ENCODE measurements at regions of chr3 and their contacts with region 1.

Region 1: DNA sequence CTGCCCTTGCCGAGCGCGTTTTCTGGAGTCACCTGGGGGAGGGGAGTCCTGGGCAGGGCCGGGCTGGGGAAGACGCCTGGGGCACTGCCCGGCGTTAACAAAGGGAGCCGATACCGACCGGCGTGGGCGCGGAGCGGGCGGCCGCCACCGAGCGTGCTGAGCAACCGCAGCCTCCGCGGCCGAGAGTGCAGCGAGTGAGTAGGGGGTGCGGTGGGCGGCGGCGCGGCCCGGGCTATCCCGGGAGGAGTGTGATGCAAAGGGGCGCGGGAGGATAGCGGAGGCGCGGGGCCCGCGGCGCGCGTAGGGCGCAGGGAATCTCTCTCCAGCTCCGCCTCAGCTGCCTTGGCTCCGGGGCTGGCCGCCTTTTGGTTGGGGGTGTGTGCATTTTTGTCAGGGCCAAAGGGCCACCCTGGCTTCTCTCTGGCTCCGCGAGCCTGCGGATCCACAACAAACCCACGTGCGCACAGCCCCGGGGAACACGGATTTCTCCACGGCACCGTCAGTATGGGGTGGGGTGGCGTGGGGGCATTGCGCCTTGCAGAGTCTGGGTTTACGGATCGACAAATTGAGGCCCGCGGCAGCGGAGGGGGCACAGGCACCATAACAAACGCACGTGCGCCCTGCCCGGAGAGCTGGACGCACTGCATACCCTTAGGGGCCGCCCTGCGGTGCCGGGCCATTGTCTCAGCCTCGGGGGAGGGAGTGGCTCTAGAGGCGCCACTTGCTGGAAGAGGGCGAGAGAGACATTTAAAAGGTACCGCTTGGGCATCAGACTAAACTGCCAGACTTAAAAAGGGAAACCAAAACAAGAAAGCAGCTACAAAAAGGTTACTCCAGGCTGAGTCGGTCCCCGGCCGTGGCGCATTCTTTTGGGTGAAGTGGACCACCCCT is 560 bp downstream of the ST6GAL1 start:
- DNase-seq: peak; percentile 39 to 78 (median 75)
- ATAC-seq: peak; percentile 87
- H3K4me3 ChIP-seq: peak overlapping the region; percentile 79
- H3K4me3 Mint-ChIP-seq: peak overlapping the region; percentile 89 to 100 (median 98)
- H3K27ac ChIP-seq: peak overlapping the region; percentile 74
- H3K27ac Mint-ChIP-seq: peak overlapping the region; percentile 88 to 98 (median 95)
- H3K4me1 ChIP-seq: peaks cover 8 to 20% of the 10 kb centered on the region in 2 donors
- H3K4me1 Mint-ChIP-seq: peaks cover 30 to 47% (median 40%) of the 10 kb centered on the region in 7 donors
- H3K27me3 ChIP-seq: no peaks in the 10 kb centered on the region
- H3K27me3 Mint-ChIP-seq: no peaks in the 10 kb centered on the region

Region 2: GRCh38 chr3:185042312-185043050 is 1888.4 kb before region 1 on chr3:
- CTCF ChIA-PET with region 1: no interaction called
- POLR2A ChIA-PET with region 1: no interaction called
- intact Hi-C with region 1: no loop called
- DNase-seq: no peak
- ATAC-seq: no peak
- H3K4me3 ChIP-seq: no peak overlapping the region
- H3K4me3 Mint-ChIP-seq: no peak overlapping the region
- H3K27ac ChIP-seq: no peak overlapping the region
- H3K27ac Mint-ChIP-seq: no peak overlapping the region
- H3K4me1 ChIP-seq: no peaks in the 10 kb centered on the region
- H3K4me1 Mint-ChIP-seq: peaks cover 0 to 10% (median 0%) of the 10 kb centered on the region in 7 donors
- H3K27me3 ChIP-seq: no peaks in the 10 kb centered on the region
- H3K27me3 Mint-ChIP-seq: no peaks in the 10 kb centered on the region

Region 3: GRCh38 chr3:186783073-186783730 is 147.7 kb before region 1 on chr3 and contains the start of gene EIF4A2:
- CTCF ChIA-PET with region 1: no interaction called
- POLR2A ChIA-PET with region 1: interaction called, 8 read pairs
- intact Hi-C with region 1: loop called (anchors 1 to 2 kb)
- DNase-seq: peak; percentile 87 to 93 (median 91)
- ATAC-seq: peak; percentile 86
- H3K4me3 ChIP-seq: peak within 1 kb of the TSS; percentile 88
- H3K4me3 Mint-ChIP-seq: peak within 1 kb of the TSS; percentile 95 to 100 (median 99)
- H3K27ac ChIP-seq: peak within 1 kb of the TSS; percentile 97
- H3K27ac Mint-ChIP-seq: peak within 1 kb of the TSS; percentile 96 to 100 (median 99)
- H3K4me1 ChIP-seq: peaks cover 37 to 39% of the 10 kb centered on the region in 2 donors
- H3K4me1 Mint-ChIP-seq: peaks cover 22 to 59% (median 51%) of the 10 kb centered on the region in 7 donors
- H3K27me3 ChIP-seq: no peaks in the 10 kb centered on the region
- H3K27me3 Mint-ChIP-seq: peaks cover 0 to 3% (median 0%) of the 10 kb centered on the region in 5 donors
- total RNA-seq, gene EIF4A2: 401 to 804 (median 650) TPM

Region 4: DNA sequence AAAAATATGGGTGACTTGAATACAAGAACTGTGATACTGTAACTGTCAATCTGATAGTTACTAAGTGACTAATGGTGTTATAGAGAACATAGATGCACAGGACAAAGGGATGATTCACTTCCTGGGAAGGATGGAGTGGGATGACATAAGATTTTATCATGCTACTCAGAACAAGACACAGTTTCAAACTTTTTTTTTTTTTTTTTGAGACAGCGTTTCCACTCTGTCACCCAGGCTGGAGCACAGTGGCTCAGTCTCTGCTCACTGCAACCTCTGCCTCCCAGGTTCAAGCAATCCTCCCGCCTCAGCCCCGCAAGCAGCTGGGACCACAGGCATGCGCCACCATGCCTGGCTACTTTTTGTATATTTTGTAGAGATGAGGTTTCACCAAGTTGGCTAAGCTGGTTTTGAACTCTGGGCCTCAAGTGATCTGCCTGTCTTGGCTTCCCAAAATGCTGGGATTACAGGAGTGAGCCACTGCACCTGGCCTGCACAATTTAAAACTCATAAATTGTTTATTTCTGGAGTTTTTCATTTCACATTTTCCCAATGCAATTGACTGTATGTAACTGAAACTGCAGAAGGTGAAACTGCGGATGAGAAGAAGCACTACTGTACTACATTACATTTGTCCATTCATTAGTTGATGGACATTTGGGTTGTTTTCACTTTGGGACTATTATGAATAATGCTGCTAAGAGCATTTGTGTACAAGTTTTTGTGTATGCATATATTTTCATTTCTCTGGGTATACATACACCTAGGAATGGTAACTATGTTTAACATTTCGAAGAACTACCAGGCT is 47.8 kb before region 1 on chr3:
- CTCF ChIA-PET with region 1: no interaction called
- POLR2A ChIA-PET with region 1: interaction called, 5 read pairs
- intact Hi-C with region 1: loop called in 1 of 2 experiments (anchors 1 kb)
- DNase-seq: peak in 1 of 9 donors; percentile 64
- ATAC-seq: peak; percentile 45
- H3K4me3 ChIP-seq: no peak overlapping the region
- H3K4me3 Mint-ChIP-seq: peak overlapping the region in 2 of 10 donors; percentile 37 to 49
- H3K27ac ChIP-seq: no peak overlapping the region
- H3K27ac Mint-ChIP-seq: peak overlapping the region in 3 of 9 donors; percentile 47 to 64 (median 54)
- H3K4me1 ChIP-seq: peaks cover 13 to 25% of the 10 kb centered on the region in 2 donors
- H3K4me1 Mint-ChIP-seq: peaks cover 15 to 50% (median 41%) of the 10 kb centered on the region in 7 donors
- H3K27me3 ChIP-seq: no peaks in the 10 kb centered on the region
- H3K27me3 Mint-ChIP-seq: peaks cover 0 to 2% (median 0%) of the 10 kb centered on the region in 5 donors

Region 5: DNA sequence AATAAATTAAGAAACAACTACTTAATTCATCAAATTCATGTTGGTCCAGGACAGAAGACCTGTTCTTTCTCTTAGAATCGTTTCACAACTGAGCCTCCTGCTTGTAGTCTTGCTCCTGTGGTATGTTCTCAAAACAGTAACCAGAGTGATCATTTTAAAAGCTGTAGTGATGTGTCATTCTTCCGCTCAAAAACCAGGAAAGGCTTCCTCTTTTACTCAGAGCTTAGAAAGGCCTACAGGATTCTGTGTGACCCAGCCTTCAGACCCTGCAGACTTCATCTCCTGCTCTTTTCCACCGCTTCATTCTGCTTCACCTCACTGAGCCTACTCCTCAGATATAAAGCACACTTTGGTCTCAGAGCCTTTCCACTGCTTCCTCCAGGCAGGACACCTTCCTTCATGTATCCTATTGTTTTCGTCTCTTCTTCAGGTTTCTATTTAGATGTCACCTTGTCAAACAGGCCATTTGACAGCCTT is 22.2 kb after region 1 on chr3:
- CTCF ChIA-PET with region 1: interaction called, 3 read pairs
- POLR2A ChIA-PET with region 1: no interaction called
- intact Hi-C with region 1: loop called in 1 of 2 experiments (anchors 1 kb)
- DNase-seq: no peak
- ATAC-seq: peak; percentile 70
- H3K4me3 ChIP-seq: no peak overlapping the region
- H3K4me3 Mint-ChIP-seq: peak overlapping the region; percentile 0 to 76 (median 45)
- H3K27ac ChIP-seq: peak overlapping the region; percentile 6
- H3K27ac Mint-ChIP-seq: peak overlapping the region; percentile 18 to 91 (median 63)
- H3K4me1 ChIP-seq: peaks cover 13 to 52% of the 10 kb centered on the region in 2 donors
- H3K4me1 Mint-ChIP-seq: peaks cover 71 to 95% (median 83%) of the 10 kb centered on the region in 7 donors
- H3K27me3 ChIP-seq: no peaks in the 10 kb centered on the region
- H3K27me3 Mint-ChIP-seq: no peaks in the 10 kb centered on the region

Region 6: DNA sequence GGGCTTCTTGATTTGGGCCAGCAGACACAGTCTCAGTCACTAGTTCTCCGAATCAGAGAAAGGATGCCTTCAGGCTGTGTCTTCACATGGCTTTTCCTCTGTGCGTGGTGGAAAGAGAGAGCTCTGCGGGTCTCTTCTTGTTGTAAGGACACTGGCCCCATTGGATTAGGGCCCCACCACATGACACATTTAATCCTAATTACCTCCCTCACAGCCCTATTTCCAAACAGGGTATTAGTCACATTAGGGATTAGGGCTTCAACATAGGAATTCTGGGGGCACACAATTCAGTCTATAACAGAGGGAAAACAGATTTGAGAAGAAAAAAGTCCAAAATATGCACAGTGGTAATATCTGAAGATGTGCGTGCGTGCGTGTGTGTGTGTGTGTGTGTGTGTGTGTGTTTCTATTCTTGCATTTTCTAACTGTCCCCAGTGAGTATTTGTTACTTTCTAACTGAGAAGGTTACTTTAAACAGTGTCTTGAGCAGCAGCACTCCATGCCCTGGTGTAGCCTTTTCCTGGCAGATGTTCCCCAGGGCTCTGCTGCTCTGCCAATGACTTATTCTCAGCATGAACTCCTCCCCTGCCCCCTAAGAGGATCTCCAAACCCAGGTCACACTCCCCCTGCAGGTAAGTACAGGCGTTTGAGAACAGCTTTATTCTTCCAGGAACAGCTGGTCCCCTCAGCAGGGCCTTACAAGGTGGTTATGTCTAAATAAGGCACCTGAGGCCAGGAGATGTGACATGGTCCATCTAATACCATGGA is 135.5 kb after region 1 on chr3:
- CTCF ChIA-PET with region 1: interaction called, 3 read pairs
- POLR2A ChIA-PET with region 1: interaction called, 3 read pairs
- intact Hi-C with region 1: loop called (anchors 1 to 2 kb)
- DNase-seq: peak in 7 of 9 donors; percentile 54 to 75 (median 67)
- ATAC-seq: peak; percentile 83
- H3K4me3 ChIP-seq: no peak overlapping the region
- H3K4me3 Mint-ChIP-seq: peak overlapping the region in 7 of 10 donors; percentile 18 to 42 (median 31)
- H3K27ac ChIP-seq: peak overlapping the region; percentile 14
- H3K27ac Mint-ChIP-seq: peak overlapping the region; percentile 61 to 92 (median 84)
- H3K4me1 ChIP-seq: peaks cover 13 to 38% of the 10 kb centered on the region in 2 donors
- H3K4me1 Mint-ChIP-seq: peaks cover 49 to 87% (median 79%) of the 10 kb centered on the region in 7 donors
- H3K27me3 ChIP-seq: no peaks in the 10 kb centered on the region
- H3K27me3 Mint-ChIP-seq: no peaks in the 10 kb centered on the region

Region 7: DNA sequence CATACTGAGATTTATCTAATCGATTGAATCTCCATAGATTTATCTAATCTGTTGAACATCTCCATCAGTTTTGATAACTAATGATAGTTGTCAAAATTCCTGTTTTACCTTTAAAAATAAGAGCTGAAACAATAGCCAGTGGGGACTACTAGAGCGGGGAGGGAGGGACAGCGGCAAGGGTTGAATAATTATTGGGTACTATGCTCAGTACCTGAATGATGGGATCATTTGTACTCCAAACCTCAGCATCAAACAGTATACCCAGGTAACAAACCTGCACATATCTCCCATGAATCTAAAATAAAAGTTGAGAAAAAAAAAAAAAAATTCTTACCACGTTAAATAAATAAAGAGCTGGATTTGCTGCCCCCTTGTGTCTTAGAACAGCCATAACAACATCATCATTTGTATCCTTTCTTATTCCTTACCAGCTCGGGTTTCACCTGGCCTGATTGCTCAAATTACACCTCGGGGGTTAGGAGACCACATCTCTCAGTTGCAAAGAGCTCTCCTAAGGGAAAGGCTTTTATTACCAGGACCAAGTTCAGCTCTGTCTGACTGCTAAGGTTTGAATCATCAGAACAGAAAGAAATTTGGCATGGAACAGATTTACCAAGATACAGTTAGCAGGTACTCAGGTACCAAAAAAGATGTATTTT is 234.1 kb after region 1 on chr3:
- CTCF ChIA-PET with region 1: interaction called, 4 read pairs
- POLR2A ChIA-PET with region 1: interaction called, 5 read pairs
- intact Hi-C with region 1: loop called in 1 of 2 experiments (anchors 1 kb)
- DNase-seq: peak in 7 of 9 donors; percentile 53 to 78 (median 72)
- ATAC-seq: peak; percentile 86
- H3K4me3 ChIP-seq: no peak overlapping the region
- H3K4me3 Mint-ChIP-seq: no peak overlapping the region
- H3K27ac ChIP-seq: no peak overlapping the region
- H3K27ac Mint-ChIP-seq: peak overlapping the region in 1 of 9 donors; percentile 21
- H3K4me1 ChIP-seq: peaks cover 0 to 5% of the 10 kb centered on the region in 2 donors
- H3K4me1 Mint-ChIP-seq: peaks cover 3 to 15% (median 7%) of the 10 kb centered on the region in 7 donors
- H3K27me3 ChIP-seq: no peaks in the 10 kb centered on the region
- H3K27me3 Mint-ChIP-seq: peaks cover 0 to 39% (median 4%) of the 10 kb centered on the region in 5 donors

Region 8: GRCh38 chr3:188362405-188362831 is 1431.5 kb after region 1 on chr3:
- CTCF ChIA-PET with region 1: no interaction called
- POLR2A ChIA-PET with region 1: no interaction called
- intact Hi-C with region 1: no loop called
- DNase-seq: no peak
- ATAC-seq: peak; percentile 33
- H3K4me3 ChIP-seq: no peak overlapping the region
- H3K4me3 Mint-ChIP-seq: peak overlapping the region in 8 of 10 donors; percentile 1 to 71 (median 56)
- H3K27ac ChIP-seq: no peak overlapping the region
- H3K27ac Mint-ChIP-seq: peak overlapping the region in 4 of 9 donors; percentile 63 to 83 (median 64)
- H3K4me1 ChIP-seq: peaks cover 31 to 32% of the 10 kb centered on the region in 2 donors
- H3K4me1 Mint-ChIP-seq: peaks cover 31 to 69% (median 47%) of the 10 kb centered on the region in 7 donors
- H3K27me3 ChIP-seq: no peaks in the 10 kb centered on the region
- H3K27me3 Mint-ChIP-seq: peaks cover 0 to 2% (median 0%) of the 10 kb centered on the region in 5 donors